ENCODE measurements at regions of chrX and their contacts with region 1.

Region 1: GRCh38 chrX:153953342-153953830 is 8.9 kb upstream of the RENBP start:
- DNase-seq: peak in 4 of 6 donors; percentile 76 to 91 (median 82)
- ATAC-seq: peak; percentile 57 to 88 (median 86)
- H3K4me3 ChIP-seq: no peak overlapping the region
- H3K27ac ChIP-seq: no peak overlapping the region
- H3K4me1 ChIP-seq: no peaks in the 10 kb centered on the region
- H3K27me3 ChIP-seq: peaks cover 0 to 4% (median 0%) of the 10 kb centered on the region in 4 donors
- CTCF ChIP-seq: peak; percentile 98 to 99 (median 99)

Region 2: GRCh38 chrX:153763989-153764755 is 189.2 kb before region 1 on chrX and contains the start of gene PLXNB3:
- intact Hi-C with region 1: loop called in 2 of 3 experiments (anchors 5 to 10 kb)
- DNase-seq: peak; percentile 67 to 96 (median 86)
- ATAC-seq: peak; percentile 88 to 95 (median 91)
- H3K4me3 ChIP-seq: peak within 1 kb of the TSS in 1 of 4 donors; percentile 8
- H3K27ac ChIP-seq: peak within 1 kb of the TSS in 3 of 4 donors; percentile 12 to 53 (median 34)
- H3K4me1 ChIP-seq: no peaks in the 10 kb centered on the region
- H3K27me3 ChIP-seq: peaks cover 0 to 3% (median 0%) of the 10 kb centered on the region in 4 donors
- CTCF ChIP-seq: peak; percentile 82 to 93 (median 88)
- total RNA-seq, gene PLXNB3: 4.0 to 9.0 (median 5.2) TPM

Region 3: GRCh38 chrX:153778684-153779101 is 174.7 kb before region 1 on chrX:
- intact Hi-C with region 1: loop called in 1 of 3 experiments (anchors 10 kb)
- DNase-seq: peak in 2 of 6 donors; percentile 18 to 68
- ATAC-seq: no peak
- H3K4me3 ChIP-seq: no peak overlapping the region
- H3K27ac ChIP-seq: no peak overlapping the region
- H3K4me1 ChIP-seq: no peaks in the 10 kb centered on the region
- H3K27me3 ChIP-seq: no peaks in the 10 kb centered on the region
- CTCF ChIP-seq: no peak